ENCODE measurements at regions of chr16 and their contacts with region 1.

Region 1: DNA sequence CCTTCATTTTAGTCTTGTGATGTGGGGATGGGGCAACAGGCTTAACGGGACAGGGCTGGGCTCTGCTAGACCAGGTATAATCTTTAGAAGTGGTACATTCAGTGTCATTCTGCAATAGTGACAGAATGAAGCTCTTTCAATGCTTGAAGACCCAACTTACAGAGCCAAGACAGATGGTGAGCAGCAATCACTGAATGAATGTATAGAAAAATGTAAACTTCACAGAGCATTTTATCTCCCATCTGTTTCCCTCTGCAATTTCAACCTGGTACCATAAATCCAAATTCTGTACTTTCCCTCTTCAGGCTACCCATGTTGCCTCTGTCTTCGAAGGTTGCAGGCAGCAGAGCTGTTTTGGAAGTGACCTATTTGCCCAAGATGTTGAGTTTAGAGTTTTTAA is 33.5 kb upstream of the GOT2 start:
- DNase-seq: no peak
- H3K4me3 ChIP-seq: no peak overlapping the region
- H3K27ac ChIP-seq: no peak overlapping the region
- H3K4me1 ChIP-seq: no peaks in the 10 kb centered on the region
- H3K27me3 ChIP-seq: peaks cover 63% of the 10 kb centered on the region
- CTCF ChIP-seq: no peak

Region 2: GRCh38 chr16:58366247-58367031 is 401.1 kb before region 1 on chr16:
- CTCF ChIA-PET with region 1: no interaction called
- POLR2A ChIA-PET with region 1: interaction called, 10 read pairs
- intact Hi-C with region 1: no loop called
- DNase-seq: peak; percentile 7 to 94
- H3K4me3 ChIP-seq: no peak overlapping the region
- H3K27ac ChIP-seq: peak overlapping the region; percentile 44
- H3K4me1 ChIP-seq: peaks cover 17% of the 10 kb centered on the region
- H3K27me3 ChIP-seq: no peaks in the 10 kb centered on the region
- CTCF ChIP-seq: no peak